Left ventricle myocardium inferior (tissue), 1 donor: ENCODE measurements at regions of chr11 and their contacts with region 1.

Region 1: DNA sequence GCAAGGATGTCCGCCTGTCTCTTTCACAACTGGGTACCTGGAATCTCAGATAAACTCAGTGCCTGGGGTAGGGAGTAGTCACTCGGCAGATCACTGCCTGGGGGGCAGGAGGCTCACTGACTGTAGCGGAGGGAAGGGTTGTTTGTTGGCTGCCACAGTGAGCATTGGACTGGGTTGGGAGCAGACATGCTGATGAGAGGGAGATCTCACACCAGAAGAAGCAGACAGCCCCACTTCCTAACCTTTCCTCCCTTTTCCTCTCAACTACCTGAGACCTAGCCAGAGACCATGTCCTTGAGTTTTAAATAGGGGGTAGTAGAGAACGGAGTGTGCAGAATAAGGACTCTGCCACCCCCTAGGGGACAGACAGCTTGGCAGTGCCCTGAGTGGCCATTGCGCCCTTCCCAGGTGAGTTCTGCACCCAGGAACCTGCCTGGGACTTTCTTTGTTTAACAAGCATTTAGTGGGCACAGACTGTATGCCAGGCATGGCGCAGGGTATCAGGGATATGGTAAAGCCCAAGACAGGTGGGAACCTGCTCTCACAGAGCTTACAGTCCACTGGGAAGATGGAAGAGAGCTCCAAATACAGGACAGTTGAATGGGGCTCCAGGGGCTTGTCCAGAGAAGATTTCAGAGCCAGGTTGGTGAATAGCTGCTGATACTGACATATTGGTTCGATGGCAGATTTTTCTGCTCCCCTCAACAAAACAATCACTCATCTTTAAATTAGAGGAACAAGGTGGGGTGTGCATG is 115.7 kb upstream of the NNMT start:
- DNase-seq: no peak
- H3K4me3 ChIP-seq: peak overlapping the region; percentile 52
- H3K27ac ChIP-seq: peak overlapping the region; percentile 100
- H3K4me1 ChIP-seq: peaks cover 96% of the 10 kb centered on the region
- H3K27me3 ChIP-seq: no peaks in the 10 kb centered on the region
- CTCF ChIP-seq: peak; percentile 71

Region 2: DNA sequence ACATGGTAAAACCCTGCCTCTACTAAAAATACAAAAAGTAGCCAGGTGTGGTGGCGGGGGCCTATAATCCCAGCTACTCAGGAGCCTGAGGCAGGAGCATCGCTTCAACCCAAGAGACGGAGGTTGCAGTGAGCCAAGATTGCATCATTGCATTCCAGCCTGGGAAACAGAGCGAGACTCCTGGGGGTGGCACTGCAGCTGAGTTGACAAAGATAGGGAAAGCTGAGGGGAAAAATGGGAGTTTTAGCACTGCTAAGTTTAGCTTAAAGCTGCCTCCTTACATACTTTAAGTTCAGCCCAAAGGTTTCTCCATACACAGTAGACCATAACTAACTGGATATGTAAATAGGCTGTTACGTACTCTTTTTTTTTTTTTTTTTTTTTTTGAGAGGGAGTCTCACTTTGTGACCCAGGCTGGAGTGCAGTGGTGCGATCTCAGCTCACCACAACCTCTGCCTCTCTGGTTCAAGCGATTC is 296.1 kb before region 1 on chr11:
- intact Hi-C with region 1: no loop called
- DNase-seq: no peak
- H3K4me3 ChIP-seq: no peak overlapping the region
- H3K27ac ChIP-seq: no peak overlapping the region
- H3K4me1 ChIP-seq: no peaks in the 10 kb centered on the region
- H3K27me3 ChIP-seq: no peaks in the 10 kb centered on the region
- CTCF ChIP-seq: no peak

Region 3: GRCh38 chr11:114059278-114059983 is 121.0 kb before region 1 on chr11 and contains the start of gene ZBTB16:
- intact Hi-C with region 1: loop called (anchors 10 kb)
- DNase-seq: peak; percentile 93
- H3K4me3 ChIP-seq: peak within 1 kb of the TSS; percentile 100
- H3K27ac ChIP-seq: peak within 1 kb of the TSS; percentile 100
- H3K4me1 ChIP-seq: peaks cover 81% of the 10 kb centered on the region
- H3K27me3 ChIP-seq: no peaks in the 10 kb centered on the region
- CTCF ChIP-seq: peak; percentile 61
- total RNA-seq, gene ZBTB16: 64.5 TPM

Region 4: GRCh38 chr11:114075891-114076441 is 104.5 kb before region 1 on chr11:
- intact Hi-C with region 1: loop called (anchors 10 kb)
- DNase-seq: no peak
- H3K4me3 ChIP-seq: peak overlapping the region; percentile 49
- H3K27ac ChIP-seq: peak overlapping the region; percentile 90
- H3K4me1 ChIP-seq: peaks cover 100% of the 10 kb centered on the region
- H3K27me3 ChIP-seq: no peaks in the 10 kb centered on the region
- CTCF ChIP-seq: peak; percentile 71

Region 5: GRCh38 chr11:114243461-114244372 is 63.2 kb after region 1 on chr11:
- intact Hi-C with region 1: no loop called
- DNase-seq: peak; percentile 67
- H3K4me3 ChIP-seq: no peak overlapping the region
- H3K27ac ChIP-seq: peak overlapping the region; percentile 77
- H3K4me1 ChIP-seq: peaks cover 66% of the 10 kb centered on the region
- H3K27me3 ChIP-seq: no peaks in the 10 kb centered on the region
- CTCF ChIP-seq: no peak

Region 6: DNA sequence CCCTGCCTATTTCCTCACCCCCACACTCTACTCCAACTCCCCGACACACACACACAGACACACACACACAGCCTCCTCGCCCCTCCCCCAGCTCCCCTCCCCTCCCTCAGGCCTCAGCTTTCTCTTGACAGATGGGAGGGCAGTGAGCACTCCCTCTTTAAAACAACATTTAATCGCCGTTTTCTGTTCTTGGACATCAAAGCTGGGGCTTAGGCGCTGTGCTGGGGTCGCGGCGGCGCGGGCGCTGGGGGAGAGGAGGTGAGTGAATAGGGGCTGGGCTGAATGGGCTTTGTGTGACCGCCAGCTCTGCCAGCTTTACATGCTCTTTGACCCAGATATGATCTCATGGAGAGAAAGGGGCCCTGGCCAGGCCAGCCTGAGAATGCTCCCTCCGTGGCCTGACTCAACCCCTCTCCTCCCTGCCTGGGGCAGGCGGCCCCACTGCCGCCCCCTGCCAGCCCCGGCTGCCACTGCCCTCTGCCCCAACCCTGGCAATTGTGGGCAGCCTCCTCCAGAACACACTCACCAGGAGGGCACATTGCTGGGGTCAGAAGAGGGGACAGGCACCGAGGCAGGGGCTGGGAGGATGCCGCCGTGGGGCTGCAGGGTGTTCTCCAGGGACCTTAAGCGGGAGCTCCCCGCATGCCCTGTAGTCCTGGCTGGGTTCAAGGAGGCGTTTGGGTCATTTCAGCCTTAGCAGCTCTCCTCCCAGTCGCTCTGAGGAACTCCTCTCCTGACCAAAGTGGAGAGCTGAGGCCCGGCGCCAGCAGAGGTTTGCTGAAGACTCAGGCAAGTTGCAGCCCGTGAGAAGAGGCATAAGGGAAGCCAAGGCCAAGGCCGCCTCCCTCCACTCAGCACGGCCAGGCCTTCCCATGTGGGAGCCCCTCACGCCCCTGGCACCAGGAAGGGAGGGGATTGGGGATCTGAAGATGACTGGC is 77.4 kb after region 1 on chr11:
- intact Hi-C with region 1: loop called (anchors 10 kb)
- DNase-seq: peak; percentile 72
- H3K4me3 ChIP-seq: peak overlapping the region; percentile 55
- H3K27ac ChIP-seq: peak overlapping the region; percentile 88
- H3K4me1 ChIP-seq: peaks cover 85% of the 10 kb centered on the region
- H3K27me3 ChIP-seq: no peaks in the 10 kb centered on the region
- CTCF ChIP-seq: peak; percentile 45